ENCODE measurements at regions of chr13 and their contacts with region 1.

Region 1: GRCh38 chr13:78121459-78122348 is 203.1 kb upstream of the EDNRB start:
- DNase-seq: peak; percentile 64
- ATAC-seq: peak; percentile 71

Region 2: DNA sequence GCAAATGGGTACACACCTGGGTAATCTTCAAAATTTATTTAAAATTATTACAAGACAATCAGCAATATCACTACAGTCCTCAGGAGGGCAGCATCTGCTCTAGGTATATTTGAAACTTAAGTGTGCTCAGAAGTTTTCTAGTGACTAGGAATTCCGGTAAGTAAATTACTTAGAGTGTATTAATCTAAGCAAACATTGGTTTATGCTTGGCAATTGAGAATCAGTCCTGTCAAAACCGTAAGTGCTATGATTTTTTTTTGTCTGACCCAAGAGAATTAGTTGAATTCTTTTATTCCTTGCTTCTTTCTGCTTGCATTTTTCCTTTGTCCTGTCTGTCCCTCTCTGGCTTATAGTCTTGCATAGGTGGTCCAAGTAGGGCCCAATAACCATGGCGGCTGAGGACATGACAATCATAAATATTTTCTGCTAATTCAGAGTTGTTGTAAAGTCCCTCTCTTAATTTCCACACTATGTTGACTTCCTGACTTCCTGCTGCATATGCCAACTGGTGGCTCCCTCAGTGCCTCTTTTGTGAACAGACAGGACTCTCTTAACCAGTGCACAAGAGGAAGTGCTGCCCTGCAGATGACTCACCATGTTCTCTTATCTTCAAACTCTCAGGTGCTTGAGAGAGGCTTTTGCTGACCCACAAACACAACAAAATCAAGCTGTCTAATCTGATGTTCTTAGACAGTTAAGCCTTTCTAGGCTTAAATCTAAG is 342.0 kb before region 1 on chr13:
- intact Hi-C with region 1: loop called (anchors 10 kb)
- DNase-seq: no peak
- ATAC-seq: peak; percentile 84